Activated CD8-positive, alpha-beta T cell treated with anti-CD3 and anti-CD28 coated beads for 36 hours (primary cell): ENCODE measurements at regions of chr10 and their contacts with region 1.

Region 1: GRCh38 chr10:25016376-25017154 is at the start of gene THNSL1:
- DNase-seq: peak; percentile 99
- ATAC-seq: peak; percentile 98
- H3K4me3 Mint-ChIP-seq: peak within 1 kb of the TSS; percentile 96
- H3K27ac Mint-ChIP-seq: peak within 1 kb of the TSS; percentile 100
- H3K4me1 Mint-ChIP-seq: peaks cover 23% of the 10 kb centered on the region
- H3K27me3 Mint-ChIP-seq: no peaks in the 10 kb centered on the region
- CTCF ChIP-seq: no peak
- total RNA-seq, gene THNSL1: 9.9 to 10.0 TPM

Region 2: GRCh38 chr10:24724381-24725228 is 292.0 kb before region 1 on chr10:
- CTCF ChIA-PET with region 1: no interaction called
- POLR2A ChIA-PET with region 1: interaction called, 8 read pairs
- intact Hi-C with region 1: loop called (anchors 10 kb)
- DNase-seq: peak; percentile 97
- ATAC-seq: peak; percentile 91
- H3K4me3 Mint-ChIP-seq: peak overlapping the region; percentile 87
- H3K27ac Mint-ChIP-seq: peak overlapping the region; percentile 91
- H3K4me1 Mint-ChIP-seq: peaks cover 25% of the 10 kb centered on the region
- H3K27me3 Mint-ChIP-seq: no peaks in the 10 kb centered on the region
- CTCF ChIP-seq: no peak

Region 3: GRCh38 chr10:24887855-24888231 is 128.7 kb before region 1 on chr10:
- CTCF ChIA-PET with region 1: no interaction called
- POLR2A ChIA-PET with region 1: interaction called, 3 read pairs
- intact Hi-C with region 1: loop called (anchors 5 kb)
- DNase-seq: peak; percentile 21
- ATAC-seq: peak; percentile 26
- H3K4me3 Mint-ChIP-seq: peak overlapping the region; percentile 67
- H3K27ac Mint-ChIP-seq: peak overlapping the region; percentile 94
- H3K4me1 Mint-ChIP-seq: peaks cover 56% of the 10 kb centered on the region
- H3K27me3 Mint-ChIP-seq: no peaks in the 10 kb centered on the region
- CTCF ChIP-seq: no peak

Region 4: GRCh38 chr10:24929056-24929544 is 87.5 kb before region 1 on chr10:
- CTCF ChIA-PET with region 1: no interaction called
- POLR2A ChIA-PET with region 1: no interaction called
- intact Hi-C with region 1: no loop called
- DNase-seq: no peak
- ATAC-seq: no peak
- H3K4me3 Mint-ChIP-seq: no peak overlapping the region
- H3K27ac Mint-ChIP-seq: no peak overlapping the region
- H3K4me1 Mint-ChIP-seq: peaks cover 28% of the 10 kb centered on the region
- H3K27me3 Mint-ChIP-seq: no peaks in the 10 kb centered on the region
- CTCF ChIP-seq: no peak